H1 (cell line): ENCODE measurements at regions of chr1 and their contacts with region 1.

Region 1: DNA sequence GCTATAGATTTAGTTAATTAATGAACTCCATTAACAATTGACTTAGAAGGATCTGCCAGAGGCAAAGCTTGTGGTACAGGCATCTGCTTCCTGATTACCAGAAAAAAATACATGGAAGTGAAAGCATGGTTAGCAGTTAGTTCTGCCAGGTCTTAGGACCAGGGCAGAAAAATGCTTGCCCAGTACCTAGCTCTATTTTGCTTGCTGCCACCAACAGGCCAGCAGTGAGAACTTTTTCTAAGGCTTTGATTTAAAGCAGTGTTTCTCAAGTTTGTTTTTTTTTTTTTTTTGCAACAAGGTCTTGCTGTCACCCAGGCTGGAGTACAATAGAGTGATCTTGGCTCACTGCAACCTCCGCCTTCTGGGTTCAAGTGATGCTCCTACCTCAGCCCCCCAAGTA is 16.4 kb upstream of the MTF1 start:
- DNase-seq: no peak
- H3K4me3 ChIP-seq: no peak overlapping the region
- H3K27ac ChIP-seq: no peak overlapping the region
- H3K4me1 ChIP-seq: no peaks in the 10 kb centered on the region
- H3K27me3 ChIP-seq: no peaks in the 10 kb centered on the region
- CTCF ChIP-seq: peak in 1 of 3 experiments; percentile 7; a peak in 1 of 4 replicates
- EP300 ChIP-seq: no peak
- POLR2A ChIP-seq: no peak
- RAD21 ChIP-seq: no peak

Region 2: DNA sequence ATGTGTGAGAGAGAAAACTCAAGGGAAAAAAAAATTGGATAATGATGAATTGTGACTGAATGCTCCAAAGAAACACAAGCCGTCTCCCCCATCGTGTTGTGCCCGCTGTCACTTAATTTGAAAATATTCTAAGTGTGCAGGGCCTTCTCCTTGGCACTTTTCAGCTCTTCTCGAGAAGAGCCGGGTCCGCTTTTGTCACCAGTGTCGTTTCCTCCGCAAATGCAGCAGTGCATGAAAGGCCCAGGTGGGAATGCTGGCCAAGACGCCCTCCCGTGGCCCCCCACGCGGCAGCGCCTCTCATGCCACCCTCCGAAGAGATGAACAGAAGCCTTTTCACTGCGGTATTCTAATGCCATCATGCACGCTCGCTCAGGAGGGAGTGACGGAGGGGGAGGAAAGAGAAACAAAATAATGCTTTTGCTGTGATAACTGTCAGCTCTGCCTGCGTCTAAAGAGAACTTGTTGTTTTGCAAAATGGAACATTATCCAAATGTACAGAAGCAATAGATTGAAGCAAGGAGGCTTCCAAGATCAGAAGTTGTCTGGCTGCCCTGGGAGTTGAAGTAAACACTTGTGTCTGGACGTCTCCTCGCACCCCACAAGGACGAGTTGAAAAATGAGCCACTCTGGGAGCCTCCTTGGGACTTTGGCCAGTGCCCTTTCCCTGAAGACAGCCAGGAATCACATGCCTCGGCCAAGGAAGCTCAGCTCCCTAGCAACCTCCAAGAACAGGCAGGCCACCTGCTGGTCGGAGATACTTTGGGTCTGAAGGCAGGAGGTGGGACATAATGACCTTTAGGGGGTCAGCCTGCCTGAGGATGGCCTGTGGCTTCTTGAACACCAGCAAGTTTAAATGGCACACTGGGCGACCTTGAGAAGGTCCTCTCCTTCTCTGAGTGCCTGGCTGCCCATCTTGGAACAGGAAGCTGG is 567.5 kb before region 1 on chr1:
- CTCF ChIA-PET with region 1: no interaction called
- POLR2A ChIA-PET with region 1: no interaction called
- DNase-seq: no peak
- H3K4me3 ChIP-seq: no peak overlapping the region
- H3K27ac ChIP-seq: no peak overlapping the region
- H3K4me1 ChIP-seq: peaks cover 0 to 7% (median 2%) of the 10 kb centered on the region in 4 experiments; a peak in 3 of 7 replicates
- H3K27me3 ChIP-seq: no peaks in the 10 kb centered on the region; a peak in 1 of 7 replicates
- CTCF ChIP-seq: no peak
- EP300 ChIP-seq: no peak
- POLR2A ChIP-seq: no peak
- RAD21 ChIP-seq: no peak

Region 3: DNA sequence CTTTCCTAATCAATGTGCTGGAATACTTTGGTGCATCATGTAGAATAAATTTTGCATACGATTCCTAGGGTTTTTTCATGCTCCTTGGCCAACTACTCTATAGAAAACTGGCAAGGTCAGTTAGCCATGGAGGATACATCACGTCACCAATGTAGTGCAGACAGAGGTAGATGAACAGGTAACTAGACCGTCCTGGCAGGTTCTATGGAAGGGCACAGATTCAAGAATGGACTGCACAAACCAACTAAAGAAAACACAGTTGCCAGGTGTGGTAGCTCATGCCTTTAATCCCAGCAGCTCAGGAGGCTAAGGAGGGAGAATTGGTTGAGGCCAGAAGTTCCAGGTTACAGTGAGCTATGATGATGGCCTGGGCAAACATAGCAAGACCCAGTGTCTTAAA is 26.4 kb before region 1 on chr1:
- CTCF ChIA-PET with region 1: no interaction called
- POLR2A ChIA-PET with region 1: no interaction called
- DNase-seq: no peak
- H3K4me3 ChIP-seq: no peak overlapping the region
- H3K27ac ChIP-seq: no peak overlapping the region
- H3K4me1 ChIP-seq: no peaks in the 10 kb centered on the region
- H3K27me3 ChIP-seq: no peaks in the 10 kb centered on the region
- CTCF ChIP-seq: no peak
- EP300 ChIP-seq: no peak
- POLR2A ChIP-seq: no peak
- RAD21 ChIP-seq: no peak

Region 4: GRCh38 chr1:37859507-37860345 is 16.1 kb before region 1 on chr1 and contains the start of gene MTF1:
- CTCF ChIA-PET with region 1: interaction called, 20 read pairs
- POLR2A ChIA-PET with region 1: interaction called, 5 read pairs
- DNase-seq: peak; percentile 82 to 97
- H3K4me3 ChIP-seq: peak within 1 kb of the TSS; percentile 83 to 100 (median 94)
- H3K27ac ChIP-seq: peak within 1 kb of the TSS; percentile 87
- H3K4me1 ChIP-seq: no peaks in the 10 kb centered on the region
- H3K27me3 ChIP-seq: no peaks in the 10 kb centered on the region
- CTCF ChIP-seq: peak; percentile 77 to 95 (median 91)
- EP300 ChIP-seq: no peak
- POLR2A ChIP-seq: peak; percentile 77 to 94
- RAD21 ChIP-seq: peak; percentile 58 to 61; a peak in 3 of 4 replicates
- total RNA-seq, gene MTF1: 12.6 and 15.5 TPM in 2 replicates

Region 5: GRCh38 chr1:37901191-37901892 is 25.5 kb after region 1 on chr1:
- CTCF ChIA-PET with region 1: no interaction called
- POLR2A ChIA-PET with region 1: no interaction called
- DNase-seq: no peak
- H3K4me3 ChIP-seq: no peak overlapping the region
- H3K27ac ChIP-seq: no peak overlapping the region
- H3K4me1 ChIP-seq: no peaks in the 10 kb centered on the region
- H3K27me3 ChIP-seq: no peaks in the 10 kb centered on the region
- CTCF ChIP-seq: no peak
- EP300 ChIP-seq: no peak
- POLR2A ChIP-seq: no peak
- RAD21 ChIP-seq: no peak